GM10248 (cell line): ENCODE measurements at regions of chr11 and their contacts with region 1.

Region 1: GRCh38 chr11:82775736-82776346 is 42.2 kb upstream of the FAM181B start:
- DNase-seq: peak; percentile 56
- CTCF ChIP-seq: peak; percentile 72

Region 2: GRCh38 chr11:82601711-82602110 is 174.1 kb before region 1 on chr11:
- CTCF ChIA-PET with region 1: no interaction called
- POLR2A ChIA-PET with region 1: no interaction called
- DNase-seq: no peak
- CTCF ChIP-seq: no peak

Region 3: GRCh38 chr11:82750643-82751139 is 25.1 kb before region 1 on chr11:
- CTCF ChIA-PET with region 1: interaction called, 11 read pairs
- POLR2A ChIA-PET with region 1: no interaction called
- DNase-seq: no peak
- CTCF ChIP-seq: no peak

Region 4: DNA sequence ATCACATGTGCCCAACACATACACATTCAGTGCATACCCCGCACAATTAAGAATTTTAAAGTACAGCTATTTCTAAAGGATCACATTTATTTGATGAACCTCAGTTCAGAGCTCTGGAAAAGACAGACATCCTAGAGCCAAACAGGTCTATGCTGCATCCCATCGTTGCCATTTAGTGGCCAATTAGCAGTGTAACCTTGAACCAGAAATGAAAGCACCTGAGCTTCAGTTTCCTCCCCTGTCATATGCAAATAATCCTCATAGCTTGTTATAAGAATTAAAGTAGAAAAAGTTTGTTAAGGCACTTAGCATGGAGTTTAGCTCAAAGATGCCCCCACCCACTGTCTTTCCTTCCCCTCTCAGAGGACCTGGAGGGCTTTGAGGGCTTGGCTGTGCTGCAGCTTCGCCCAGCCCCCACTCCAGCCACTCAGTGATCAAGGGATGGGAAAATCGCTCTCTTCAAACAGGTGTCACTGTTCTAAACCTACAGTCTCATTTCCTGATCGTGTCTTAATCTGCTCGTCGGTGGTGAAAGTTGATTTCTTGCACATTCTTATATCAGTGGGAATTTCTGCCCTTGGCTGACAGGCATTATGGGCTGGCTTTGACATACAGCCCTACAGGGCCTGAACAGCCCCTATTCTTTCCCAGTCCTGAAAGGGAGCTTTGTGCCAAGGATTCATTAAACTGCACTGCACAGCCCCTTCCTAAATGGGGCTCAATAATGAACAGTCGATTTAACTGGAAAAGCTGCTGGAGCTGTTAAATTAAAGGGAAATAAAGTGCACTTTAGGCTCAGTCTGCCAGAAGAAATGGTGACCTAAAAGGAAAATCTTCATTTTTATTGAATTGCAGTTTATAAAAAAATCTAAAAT is 18.8 kb before region 1 on chr11:
- CTCF ChIA-PET with region 1: interaction called, 12 read pairs
- POLR2A ChIA-PET with region 1: no interaction called
- DNase-seq: no peak
- CTCF ChIP-seq: no peak

Region 5: GRCh38 chr11:82765466-82766034 is 10.3 kb before region 1 on chr11:
- CTCF ChIA-PET with region 1: interaction called, 26 read pairs
- POLR2A ChIA-PET with region 1: no interaction called
- DNase-seq: no peak
- CTCF ChIP-seq: no peak

Region 6: DNA sequence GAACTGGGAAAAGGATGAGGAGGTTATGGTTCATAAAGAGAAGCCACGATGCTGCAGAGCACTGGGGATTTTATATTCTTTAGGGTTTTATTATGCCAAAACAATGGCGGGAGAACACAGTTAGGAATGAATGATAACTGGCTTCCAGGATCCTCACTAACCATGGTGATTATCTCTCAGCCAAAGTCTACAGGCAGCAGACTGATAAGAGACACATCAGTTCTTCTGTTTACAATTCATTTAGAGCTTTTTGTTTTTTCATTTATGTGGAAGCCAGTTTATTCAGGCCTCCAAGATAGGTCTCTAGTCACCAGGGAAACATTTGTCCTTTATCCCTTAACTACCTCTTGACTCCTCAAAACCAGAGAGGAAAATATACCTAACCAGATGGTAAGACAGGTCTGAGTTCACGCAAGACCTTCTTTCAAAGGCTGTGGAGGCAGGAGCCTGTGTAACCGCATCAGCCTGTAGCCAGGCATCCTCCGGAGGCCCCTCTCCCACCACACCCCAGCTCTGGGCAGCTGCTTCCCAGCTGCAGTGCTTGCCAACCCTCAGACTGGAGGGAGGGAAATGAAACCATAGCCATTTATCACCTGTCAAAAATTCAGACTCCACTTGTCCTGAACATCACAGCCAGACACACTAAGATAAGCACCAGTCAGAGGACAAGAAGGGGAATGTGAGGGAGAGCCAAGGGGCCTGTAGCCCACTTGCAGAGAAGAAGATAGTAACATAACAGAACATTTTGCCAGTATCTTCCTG is 15.1 kb after region 1 on chr11:
- CTCF ChIA-PET with region 1: interaction called, 53 read pairs
- POLR2A ChIA-PET with region 1: no interaction called
- DNase-seq: no peak
- CTCF ChIP-seq: no peak

Region 7: GRCh38 chr11:82818409-82819043 is 42.7 kb after region 1 on chr11:
- CTCF ChIA-PET with region 1: no interaction called
- POLR2A ChIA-PET with region 1: no interaction called
- DNase-seq: no peak
- CTCF ChIP-seq: no peak